Prostate gland (tissue), 2 donors: ENCODE measurements at regions of chr19 and their contacts with region 1.

Region 1: DNA sequence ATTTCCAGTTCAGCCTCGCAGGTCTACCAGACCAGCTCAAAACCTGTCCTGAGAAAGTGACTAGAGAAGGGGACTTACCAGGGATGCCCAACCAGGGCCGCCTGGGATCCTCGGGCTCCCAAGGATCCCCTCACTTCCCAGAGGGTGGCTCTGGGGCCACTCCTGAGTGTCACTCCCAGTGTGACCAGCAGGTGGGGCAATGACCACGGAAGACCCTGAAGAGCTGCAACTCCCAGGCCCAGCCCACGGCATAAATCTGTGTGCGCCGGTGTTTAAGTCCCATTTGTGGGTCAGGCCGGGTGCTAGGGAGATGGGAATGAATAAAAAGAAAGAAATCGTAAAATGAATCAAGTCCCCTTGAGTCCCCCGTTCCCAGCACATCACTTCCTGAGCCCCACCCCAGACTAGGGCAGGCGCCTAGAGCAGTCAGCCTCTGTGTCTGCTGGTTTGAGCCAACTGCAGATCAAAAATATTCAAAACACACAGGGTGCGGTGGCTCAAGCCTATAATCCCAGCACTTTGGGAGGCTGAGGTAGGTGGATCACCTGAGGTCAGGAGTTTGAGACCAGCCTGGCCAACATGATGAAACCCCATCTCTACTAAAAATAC is 10.7 kb downstream of the PTGIR start:
- DNase-seq: peak; percentile 74
- H3K4me3 ChIP-seq: no peak overlapping the region
- H3K27ac ChIP-seq: no peak overlapping the region
- H3K4me1 ChIP-seq: no peaks in the 10 kb centered on the region
- H3K27me3 ChIP-seq: no peaks in the 10 kb centered on the region
- CTCF ChIP-seq: peak; percentile 73 to 90 (median 79)
- POLR2A ChIP-seq: no peak

Region 2: DNA sequence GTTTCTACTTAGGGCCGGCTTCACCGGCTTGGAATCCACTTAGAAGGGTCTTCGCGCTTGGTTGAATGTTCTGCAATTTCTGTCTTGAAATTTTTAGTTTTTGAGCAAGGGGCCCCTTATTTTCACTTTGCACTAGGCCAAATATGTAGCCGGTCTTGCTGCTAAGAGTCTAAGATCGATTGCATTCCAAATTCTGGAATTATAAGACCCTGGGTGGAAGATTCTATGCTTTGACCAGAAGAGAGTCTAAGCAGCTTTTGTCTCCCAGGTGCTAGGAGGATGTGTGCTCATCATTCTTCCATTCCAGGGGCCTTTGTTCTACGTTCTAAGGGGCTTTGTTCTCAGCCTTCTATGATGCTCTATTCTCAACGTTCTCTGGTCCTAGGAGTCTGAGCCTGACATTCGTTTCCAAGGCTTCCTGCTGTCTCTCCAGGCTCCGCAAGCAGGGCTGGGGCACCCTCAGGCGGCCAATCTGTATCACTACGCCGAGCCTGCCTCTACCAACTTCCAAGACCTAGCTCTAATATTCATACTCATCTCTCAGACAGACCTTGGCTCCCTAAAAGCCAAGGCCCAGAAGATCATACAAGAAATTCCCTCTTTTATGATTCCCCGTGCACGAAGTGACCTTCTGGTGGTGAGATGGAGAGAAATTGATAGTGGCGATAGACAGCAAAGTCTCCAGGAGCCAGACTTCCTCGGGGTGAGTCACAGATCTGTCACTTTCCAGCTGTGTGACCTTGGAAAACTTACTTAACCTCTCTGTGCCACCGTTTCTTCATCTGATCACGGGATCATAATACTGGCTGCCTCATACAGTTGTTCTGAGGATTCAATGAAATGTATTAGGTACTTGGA is 47.7 kb after region 1 on chr19:
- intact Hi-C with region 1: loop called (anchors 2 kb)
- DNase-seq: peak; percentile 83
- H3K4me3 ChIP-seq: peak overlapping the region; percentile 7 to 23
- H3K27ac ChIP-seq: peak overlapping the region; percentile 65 to 74
- H3K4me1 ChIP-seq: peaks cover 4% of the 10 kb centered on the region
- H3K27me3 ChIP-seq: no peaks in the 10 kb centered on the region
- CTCF ChIP-seq: peak in 3 of 4 experiments; percentile 63 to 95 (median 92)
- POLR2A ChIP-seq: no peak